GM13976 (cell line): ENCODE measurements at regions of chr12 and their contacts with region 1.

Region 1: GRCh38 chr12:66409195-66409871 is 107.0 kb downstream of the HELB start:
- DNase-seq: no peak
- CTCF ChIP-seq: peak; percentile 17

Region 2: DNA sequence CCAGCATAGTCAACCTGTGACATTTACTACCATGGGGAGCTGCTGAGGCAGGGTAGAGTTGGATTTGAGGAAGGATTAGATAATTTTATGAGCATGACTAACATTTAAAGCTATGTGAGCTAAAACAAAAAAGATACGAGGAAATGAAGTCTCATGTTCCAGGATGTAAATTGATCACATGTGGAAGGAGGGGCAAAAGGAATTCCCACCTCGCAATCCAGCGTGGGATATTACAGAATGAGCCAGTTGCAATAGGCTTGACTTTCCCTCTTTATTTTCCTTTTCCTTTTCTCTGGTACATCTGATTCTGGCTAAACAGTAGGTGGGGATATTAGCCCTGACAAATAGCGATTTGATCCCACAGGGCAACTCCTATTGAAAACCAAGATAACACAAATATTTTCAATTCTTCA is 800.0 kb before region 1 on chr12:
- in situ Hi-C with region 1: no loop called
- DNase-seq: no peak
- CTCF ChIP-seq: no peak

Region 3: DNA sequence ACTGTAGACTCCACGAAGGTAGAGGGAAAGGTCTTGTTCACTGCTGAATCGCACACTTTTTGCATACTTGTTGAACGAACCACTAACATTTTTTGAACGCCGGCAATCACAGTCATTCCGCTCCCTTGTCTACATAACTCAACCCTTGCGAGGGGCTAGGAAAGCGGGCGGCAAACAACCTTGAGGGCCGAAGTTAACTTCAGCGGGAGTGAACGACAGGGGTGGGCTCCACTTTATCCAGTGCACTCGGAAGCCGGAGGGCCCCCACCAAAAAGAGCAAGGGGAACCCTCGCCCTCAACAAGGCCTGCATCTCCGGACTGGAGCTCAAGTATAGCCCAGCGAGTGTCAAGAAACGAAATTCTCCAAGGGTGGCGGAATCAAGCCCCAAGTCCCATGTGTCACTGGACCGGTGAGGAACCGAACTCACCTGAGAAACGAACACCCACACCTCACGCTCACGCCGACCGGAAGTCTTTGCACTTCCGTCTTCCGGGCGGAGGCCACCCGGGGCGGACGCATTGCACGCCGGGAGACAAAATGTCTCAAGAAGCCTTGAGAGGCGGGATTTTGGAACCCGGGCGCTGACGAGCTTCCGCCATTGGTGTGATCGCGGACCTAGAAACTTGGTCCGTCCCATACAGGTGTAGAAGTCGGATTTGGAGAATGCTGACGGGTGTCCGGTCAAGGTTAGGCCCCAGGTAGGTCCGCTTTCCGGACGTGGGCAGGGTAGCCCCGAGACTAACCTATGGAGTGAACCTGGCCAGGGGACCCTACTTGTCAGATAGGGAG is 278.9 kb before region 1 on chr12 and contains the start of gene LLPH:
- in situ Hi-C with region 1: loop called (anchors 25 kb)
- DNase-seq: peak; percentile 93
- CTCF ChIP-seq: no peak